ENCODE measurements at regions of chr1 and their contacts with region 1.

Region 1: GRCh38 chr1:212721388-212722247 is 22.0 kb upstream of the BATF3 start:
- DNase-seq: peak; percentile 43
- H3K4me3 Mint-ChIP-seq: peak overlapping the region; percentile 43
- H3K27ac Mint-ChIP-seq: peak overlapping the region; percentile 73
- H3K4me1 Mint-ChIP-seq: peaks cover 52% of the 10 kb centered on the region
- H3K27me3 Mint-ChIP-seq: no peaks in the 10 kb centered on the region

Region 2: DNA sequence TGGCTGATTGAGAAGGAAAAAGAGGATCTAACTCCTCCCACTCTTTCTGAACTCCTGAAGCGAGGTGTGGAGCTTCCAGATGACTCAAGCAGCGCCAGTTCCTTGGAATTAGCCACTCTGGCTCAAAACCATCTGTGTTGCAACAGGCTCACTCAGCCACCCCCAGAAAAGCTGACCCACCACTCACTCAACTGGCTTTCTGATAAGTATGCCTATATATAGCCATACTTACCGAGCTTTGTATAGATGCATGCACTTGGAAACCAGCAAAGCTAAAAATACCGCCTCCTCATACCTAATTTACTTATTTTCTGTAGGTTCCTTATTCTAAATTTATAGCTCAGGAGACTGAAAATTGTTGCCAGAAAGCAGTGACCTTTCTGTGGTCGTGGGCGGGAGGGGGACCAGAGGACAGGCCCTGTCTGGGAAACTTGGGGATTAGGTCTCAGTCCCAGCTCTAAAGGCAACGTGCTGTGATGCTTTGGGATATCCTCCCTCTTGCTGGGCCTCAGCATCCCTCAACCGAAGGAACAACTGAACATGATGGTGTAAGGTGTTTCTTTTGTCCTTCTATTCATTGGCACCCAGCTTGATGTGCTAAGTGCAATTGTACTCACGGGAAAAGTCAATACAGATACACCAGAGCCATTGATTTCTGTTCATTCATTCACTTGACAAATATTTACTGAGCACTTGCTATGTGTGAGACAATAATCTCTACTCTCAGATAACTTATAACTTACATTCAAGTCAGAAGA is 223.2 kb before region 1 on chr1:
- intact Hi-C with region 1: no loop called
- DNase-seq: no peak
- H3K4me3 Mint-ChIP-seq: no peak overlapping the region
- H3K27ac Mint-ChIP-seq: no peak overlapping the region
- H3K4me1 Mint-ChIP-seq: no peaks in the 10 kb centered on the region
- H3K27me3 Mint-ChIP-seq: peaks cover 14% of the 10 kb centered on the region

Region 3: GRCh38 chr1:212683357-212683722 is 38.3 kb before region 1 on chr1:
- intact Hi-C with region 1: loop called (anchors 1 kb)
- DNase-seq: no peak
- H3K4me3 Mint-ChIP-seq: peak overlapping the region; percentile 41
- H3K27ac Mint-ChIP-seq: peak overlapping the region; percentile 88
- H3K4me1 Mint-ChIP-seq: peaks cover 62% of the 10 kb centered on the region
- H3K27me3 Mint-ChIP-seq: no peaks in the 10 kb centered on the region

Region 4: DNA sequence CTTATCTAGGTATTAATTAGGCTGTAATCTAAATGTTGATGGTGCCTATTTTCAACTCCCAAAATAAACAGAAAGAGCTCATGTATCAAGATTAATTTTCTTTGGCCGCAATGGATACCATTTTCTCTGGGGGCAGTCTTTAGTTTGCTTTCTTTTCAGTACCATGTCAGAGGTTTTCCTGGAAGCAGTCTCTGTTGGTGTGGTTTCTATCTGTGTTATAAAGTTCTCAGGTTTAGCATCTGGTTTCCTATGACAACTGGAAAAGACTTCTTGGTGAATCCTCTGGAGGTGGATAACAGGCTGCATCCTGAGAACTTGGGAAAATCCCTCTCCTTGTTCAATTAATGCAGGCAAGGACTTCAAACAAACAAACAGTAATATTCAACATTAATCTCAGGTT is 16.7 kb after region 1 on chr1:
- intact Hi-C with region 1: loop called (anchors 1 kb)
- DNase-seq: no peak
- H3K4me3 Mint-ChIP-seq: no peak overlapping the region
- H3K27ac Mint-ChIP-seq: peak overlapping the region; percentile 88
- H3K4me1 Mint-ChIP-seq: peaks cover 40% of the 10 kb centered on the region
- H3K27me3 Mint-ChIP-seq: no peaks in the 10 kb centered on the region

Region 5: GRCh38 chr1:212752252-212752933 is 30.8 kb after region 1 on chr1:
- intact Hi-C with region 1: loop called (anchors 1 kb)
- DNase-seq: no peak
- H3K4me3 Mint-ChIP-seq: no peak overlapping the region
- H3K27ac Mint-ChIP-seq: no peak overlapping the region
- H3K4me1 Mint-ChIP-seq: peaks cover 36% of the 10 kb centered on the region
- H3K27me3 Mint-ChIP-seq: no peaks in the 10 kb centered on the region

Region 6: GRCh38 chr1:212769459-212770167 is 48.0 kb after region 1 on chr1:
- intact Hi-C with region 1: loop called (anchors 1 kb)
- DNase-seq: no peak
- H3K4me3 Mint-ChIP-seq: no peak overlapping the region
- H3K27ac Mint-ChIP-seq: peak overlapping the region; percentile 69
- H3K4me1 Mint-ChIP-seq: peaks cover 41% of the 10 kb centered on the region
- H3K27me3 Mint-ChIP-seq: no peaks in the 10 kb centered on the region

Measured in activated T-helper 2 cell treated with anti-CD3 and anti-CD28 coated beads, Interferon-gamma antibody, Interleukin-2, Interleukin-4, amounts not matched to agents 10 μg/mL and 5 μg/mL and 100 μg/mL, durations not matched to agents 14 hours and 24 hours and 36 hours (primary cell).